Posterior vena cava (tissue), 2 donors: ENCODE measurements at regions of chr14 and their contacts with region 1.

Region 1: GRCh38 chr14:35416108-35416750 is 11.7 kb upstream of the NFKBIA start:
- DNase-seq: no peak

Region 2: GRCh38 chr14:35121887-35122695 is 294.1 kb before region 1 on chr14 and contains the starts of genes PPP2R3C and PRORP:
- intact Hi-C with region 1: loop called in 1 of 2 experiments (anchors 10 kb)
- DNase-seq: peak; percentile 97
- total RNA-seq, gene PPP2R3C: 41.6 to 49.8 TPM
- total RNA-seq, gene PRORP: 19.1 to 21.7 TPM

Region 3: GRCh38 chr14:35140718-35141581 is 275.3 kb before region 1 on chr14:
- intact Hi-C with region 1: loop called in 1 of 2 experiments (anchors 5 kb)
- DNase-seq: no peak

Region 4: GRCh38 chr14:35254736-35255135 is 161.5 kb before region 1 on chr14:
- intact Hi-C with region 1: loop called in 1 of 2 experiments (anchors 10 kb)
- DNase-seq: no peak

Region 5: GRCh38 chr14:35385042-35385839 is 31.0 kb before region 1 on chr14:
- intact Hi-C with region 1: no loop called
- DNase-seq: peak; percentile 93